ENCODE measurements at regions of chr4 and their contacts with region 1.

Region 1: DNA sequence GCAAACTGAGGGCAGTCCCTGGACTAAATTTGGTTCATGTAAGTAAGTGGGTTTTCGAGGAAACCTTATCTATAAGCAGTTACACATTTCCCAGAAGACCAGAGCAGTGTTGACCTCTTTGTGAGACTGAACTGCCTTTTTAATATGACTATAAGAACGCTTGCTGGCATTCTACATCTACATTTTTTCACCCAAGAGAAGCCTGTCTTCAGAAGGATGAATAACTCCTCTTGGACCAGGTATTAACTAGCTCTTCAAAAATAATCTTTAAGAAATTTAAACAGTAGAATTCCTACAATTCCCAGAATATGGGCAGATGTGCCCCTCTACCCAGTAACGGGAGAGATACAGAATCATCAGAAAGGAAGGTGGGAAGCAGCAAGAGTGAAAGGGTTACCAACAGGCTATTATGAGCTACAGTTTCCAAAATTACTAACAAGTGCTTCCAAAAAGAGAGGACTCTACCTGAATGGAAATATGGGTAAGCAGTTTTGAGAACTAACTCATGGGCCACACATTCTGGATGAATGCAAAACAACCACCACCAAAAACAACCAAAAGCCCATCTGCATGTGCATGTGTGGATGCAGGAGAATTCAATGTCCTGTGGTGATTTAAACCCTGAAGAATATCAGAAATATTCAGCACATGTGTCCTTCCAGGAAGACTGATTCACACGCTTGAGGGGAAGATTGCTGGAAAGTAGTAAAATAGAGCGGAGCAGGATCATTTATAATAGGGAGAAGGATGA is 17.4 kb downstream of the BBS12 start:
- DNase-seq: no peak
- CTCF ChIP-seq: no peak

Region 2: DNA sequence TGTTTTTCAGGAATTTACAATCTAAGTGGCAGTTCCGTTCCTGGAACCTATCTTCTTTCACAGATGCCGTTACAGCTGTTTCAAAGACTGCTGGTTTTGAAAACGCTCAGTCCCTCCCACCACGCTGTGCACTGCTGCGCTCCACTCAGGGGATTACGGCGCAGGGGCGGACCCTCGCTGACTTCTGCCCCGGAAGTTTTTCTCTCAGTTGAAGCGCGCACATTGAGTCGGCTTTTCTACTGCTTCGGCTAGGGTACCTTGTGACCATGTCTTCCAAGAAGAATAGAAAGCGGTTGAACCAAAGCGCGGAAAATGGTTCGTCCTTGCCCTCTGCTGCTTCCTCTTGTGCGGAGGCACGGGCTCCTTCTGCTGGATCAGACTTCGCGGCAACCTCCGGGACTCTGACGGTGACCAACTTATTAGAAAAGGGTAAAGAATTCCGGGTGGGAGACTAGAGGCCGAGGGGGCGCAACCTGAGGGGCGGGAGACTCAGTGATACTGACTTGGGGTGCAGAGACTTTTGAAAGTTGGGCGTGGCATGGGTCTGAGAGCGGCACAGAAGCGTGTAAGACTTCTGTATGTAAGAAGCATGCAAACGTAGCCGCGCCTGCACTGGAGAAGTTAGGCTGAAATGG is 173.1 kb after region 1 on chr4:
- in situ Hi-C with region 1: loop called (anchors 5 kb)
- DNase-seq: peak; percentile 84
- CTCF ChIP-seq: no peak

Region 3: GRCh38 chr4:123064390-123064789 is 314.5 kb after region 1 on chr4:
- in situ Hi-C with region 1: no loop called
- DNase-seq: no peak
- CTCF ChIP-seq: no peak

Region 4: GRCh38 chr4:123133397-123134050 is 383.6 kb after region 1 on chr4:
- in situ Hi-C with region 1: no loop called
- DNase-seq: no peak
- CTCF ChIP-seq: no peak

Measured in GM13976 (cell line).